ENCODE measurements at regions of chr17 and their contacts with region 1.

Region 1: GRCh38 chr17:68291844-68292695 is 775 bp downstream of the ARSG start:
- DNase-seq: peak; percentile 85
- H3K4me3 Mint-ChIP-seq: peak overlapping the region; percentile 81
- H3K27ac Mint-ChIP-seq: peak overlapping the region; percentile 84
- H3K4me1 Mint-ChIP-seq: peaks cover 57% of the 10 kb centered on the region
- H3K27me3 Mint-ChIP-seq: no peaks in the 10 kb centered on the region

Region 2: GRCh38 chr17:68205251-68205807 is 86.7 kb before region 1 on chr17:
- CTCF ChIA-PET with region 1: interaction called, 6 read pairs
- intact Hi-C with region 1: loop called (anchors 1 kb)
- DNase-seq: peak; percentile 93
- H3K4me3 Mint-ChIP-seq: peak overlapping the region; percentile 87
- H3K27ac Mint-ChIP-seq: peak overlapping the region; percentile 79
- H3K4me1 Mint-ChIP-seq: peaks cover 12% of the 10 kb centered on the region
- H3K27me3 Mint-ChIP-seq: peaks cover 2% of the 10 kb centered on the region

Region 3: GRCh38 chr17:68247445-68248198 is 44.4 kb before region 1 on chr17 and contains the start of gene AMZ2:
- CTCF ChIA-PET with region 1: no interaction called
- intact Hi-C with region 1: loop called (anchors 1 kb)
- DNase-seq: peak; percentile 94
- H3K4me3 Mint-ChIP-seq: peak within 1 kb of the TSS; percentile 89
- H3K27ac Mint-ChIP-seq: peak within 1 kb of the TSS; percentile 95
- H3K4me1 Mint-ChIP-seq: peaks cover 31% of the 10 kb centered on the region
- H3K27me3 Mint-ChIP-seq: no peaks in the 10 kb centered on the region
- total RNA-seq, gene AMZ2: 190 to 195 TPM

Region 4: GRCh38 chr17:68346448-68346847 is 54.4 kb after region 1 on chr17:
- CTCF ChIA-PET with region 1: interaction called, 3 read pairs
- intact Hi-C with region 1: loop called (anchors 1 kb)
- DNase-seq: peak; percentile 87
- H3K4me3 Mint-ChIP-seq: peak overlapping the region; percentile 75
- H3K27ac Mint-ChIP-seq: peak overlapping the region; percentile 91
- H3K4me1 Mint-ChIP-seq: peaks cover 66% of the 10 kb centered on the region
- H3K27me3 Mint-ChIP-seq: no peaks in the 10 kb centered on the region

Region 5: DNA sequence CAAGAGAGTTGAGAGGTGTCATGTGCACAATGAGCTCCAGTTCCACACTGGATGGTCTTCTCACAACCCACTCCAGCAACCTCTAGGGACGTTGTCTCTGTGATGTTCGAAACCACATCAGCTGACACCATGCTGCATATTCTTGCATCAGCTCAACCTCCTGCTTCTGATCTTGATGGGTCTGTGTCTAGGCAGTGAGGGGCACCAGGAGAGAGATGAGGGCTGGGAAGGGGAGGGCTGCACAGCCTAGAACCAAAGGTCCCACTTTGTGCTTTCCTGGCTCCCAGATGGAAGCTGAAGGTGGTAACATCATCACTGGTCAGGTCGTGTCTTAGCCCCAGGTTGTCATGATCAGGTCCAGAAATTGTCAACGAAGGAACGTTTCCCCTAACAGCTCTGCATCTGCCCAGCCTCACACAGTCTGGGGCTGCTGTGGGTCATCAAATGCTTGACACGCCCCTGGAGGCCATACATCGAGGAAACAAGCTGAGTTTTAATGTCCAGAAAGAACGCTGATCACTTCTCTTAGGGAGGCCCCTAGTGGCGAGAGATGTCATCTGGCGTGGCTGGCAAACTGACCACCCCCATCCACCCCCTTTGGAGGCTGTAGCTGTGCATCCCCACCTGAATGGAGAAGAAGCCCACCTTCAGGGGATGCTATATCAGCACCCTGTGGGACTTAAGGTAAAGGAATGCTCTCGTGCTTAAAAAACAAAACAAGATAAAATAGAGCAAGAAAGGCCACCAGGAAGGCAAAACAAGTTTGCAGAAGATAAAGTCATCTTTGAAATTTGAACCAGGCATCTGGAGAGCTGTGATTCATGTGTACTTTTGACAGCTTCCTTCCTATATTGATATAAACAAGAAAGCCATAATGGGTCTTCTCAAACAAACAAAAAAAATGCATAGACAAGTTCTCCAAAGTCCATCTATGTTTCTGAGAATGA is 106.9 kb after region 1 on chr17:
- CTCF ChIA-PET with region 1: interaction called, 10 read pairs
- intact Hi-C with region 1: loop called (anchors 1 kb)
- DNase-seq: peak; percentile 56
- H3K4me3 Mint-ChIP-seq: no peak overlapping the region
- H3K27ac Mint-ChIP-seq: peak overlapping the region; percentile 43
- H3K4me1 Mint-ChIP-seq: peaks cover 27% of the 10 kb centered on the region
- H3K27me3 Mint-ChIP-seq: no peaks in the 10 kb centered on the region

Region 6: GRCh38 chr17:68512247-68512982 is 220.3 kb after region 1 on chr17 and contains the start of gene PRKAR1A:
- CTCF ChIA-PET with region 1: no interaction called
- intact Hi-C with region 1: loop called (anchors 1 kb)
- DNase-seq: peak; percentile 95
- H3K4me3 Mint-ChIP-seq: peak within 1 kb of the TSS; percentile 99
- H3K27ac Mint-ChIP-seq: peak within 1 kb of the TSS; percentile 99
- H3K4me1 Mint-ChIP-seq: peaks cover 41% of the 10 kb centered on the region
- H3K27me3 Mint-ChIP-seq: no peaks in the 10 kb centered on the region
- total RNA-seq, gene PRKAR1A: 151 TPM

Region 7: DNA sequence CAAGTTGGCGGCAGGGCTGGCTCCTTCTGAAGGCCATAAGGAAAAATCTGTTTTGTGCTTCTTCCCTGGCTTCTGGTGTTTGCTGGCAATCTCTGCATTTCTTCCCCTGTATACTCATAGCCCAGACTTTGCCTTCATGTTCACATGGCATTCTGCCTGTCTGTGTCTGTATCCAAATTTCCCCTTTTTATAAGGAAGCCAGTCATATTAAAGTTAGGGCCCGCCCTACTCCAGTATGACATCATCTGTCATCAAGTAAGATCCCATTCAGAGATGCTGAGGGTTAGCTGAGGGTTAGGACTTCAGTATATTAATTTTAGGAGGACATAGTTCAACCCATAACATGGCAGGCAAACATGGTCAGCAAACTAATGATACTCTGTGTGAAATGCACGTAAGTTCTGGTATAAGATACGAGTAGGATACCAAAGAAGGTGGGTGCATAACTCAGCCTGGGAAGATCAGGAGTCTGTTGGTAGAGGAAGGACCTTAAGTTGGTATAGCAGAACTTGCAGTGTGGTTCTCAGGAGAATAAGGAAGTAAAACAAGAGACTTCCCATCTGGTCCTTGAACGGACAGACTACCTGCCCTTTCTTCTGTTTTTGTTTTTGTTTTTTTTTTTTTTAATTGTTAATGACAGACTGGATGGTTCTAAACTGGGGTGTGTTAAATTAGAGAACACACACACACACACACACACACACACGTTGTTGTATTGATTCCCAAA is 1136.3 kb after region 1 on chr17:
- CTCF ChIA-PET with region 1: no interaction called
- intact Hi-C with region 1: loop called (anchors 10 kb)
- DNase-seq: peak; percentile 23
- H3K4me3 Mint-ChIP-seq: no peak overlapping the region
- H3K27ac Mint-ChIP-seq: no peak overlapping the region
- H3K4me1 Mint-ChIP-seq: peaks cover 68% of the 10 kb centered on the region
- H3K27me3 Mint-ChIP-seq: no peaks in the 10 kb centered on the region

Measured in activated naive CD4-positive, alpha-beta T cell treated with anti-CD3 and anti-CD28 coated beads for 36 hours (primary cell).